PC-9 (cell line): ENCODE measurements at regions of chr1 and their contacts with region 1.

Region 1: DNA sequence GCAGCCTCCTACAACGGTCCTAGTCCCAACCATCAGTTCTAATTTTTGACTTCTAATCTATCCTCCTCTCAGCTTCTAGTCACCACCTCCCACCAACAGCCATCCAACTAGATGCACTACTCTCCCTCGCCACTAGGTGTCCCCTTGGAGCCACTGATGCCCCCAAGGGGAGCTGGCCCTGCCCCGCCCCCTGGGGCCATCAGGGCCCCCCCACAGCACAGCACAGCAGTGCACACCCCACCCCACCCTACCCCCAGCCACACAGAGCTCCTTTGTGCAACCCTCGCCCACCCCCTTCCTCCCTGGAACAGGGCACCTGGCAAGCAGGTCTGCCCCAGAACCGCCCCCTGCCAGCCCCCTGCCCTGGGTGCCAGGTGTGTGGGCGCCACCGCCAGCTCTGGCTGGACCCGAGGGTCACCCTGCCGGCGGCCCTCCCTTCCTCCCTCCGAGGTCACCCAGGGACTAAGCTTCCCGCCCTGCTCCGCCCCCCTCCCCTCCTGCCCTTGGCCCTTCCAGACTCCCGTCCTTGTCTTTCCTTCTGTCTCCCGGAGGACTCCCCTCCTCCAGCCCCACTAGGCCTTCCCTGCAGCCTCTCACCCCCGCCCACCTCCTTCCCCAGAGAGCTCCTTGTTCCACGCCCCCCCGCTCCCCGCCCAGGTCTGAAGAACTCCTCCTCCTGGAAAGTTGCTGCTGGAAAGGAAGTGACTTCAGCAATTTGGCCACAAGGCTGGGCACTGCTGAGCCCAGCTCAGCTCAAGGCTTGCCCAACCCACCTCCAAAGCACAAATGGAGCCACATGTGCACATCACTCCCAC is 47.0 kb downstream of the AHDC1 start:
- DNase-seq: peak; percentile 84 to 94
- H3K4me3 ChIP-seq: peak overlapping the region; percentile 29; the same call in 1 of the 2 replicates
- H3K27ac ChIP-seq: peak overlapping the region; percentile 88
- H3K4me1 ChIP-seq: peaks cover 22% of the 10 kb centered on the region
- H3K27me3 ChIP-seq: no peaks in the 10 kb centered on the region
- CTCF ChIP-seq: peak; percentile 91

Region 2: GRCh38 chr1:27388337-27389005 is 168.5 kb before region 1 on chr1:
- CTCF ChIA-PET with region 1: interaction called, 16 read pairs
- POLR2A ChIA-PET with region 1: no interaction called
- intact Hi-C with region 1: no loop called
- DNase-seq: peak; percentile 55 to 71
- H3K4me3 ChIP-seq: no peak overlapping the region
- H3K27ac ChIP-seq: no peak overlapping the region
- H3K4me1 ChIP-seq: no peaks in the 10 kb centered on the region
- H3K27me3 ChIP-seq: no peaks in the 10 kb centered on the region
- CTCF ChIP-seq: peak; percentile 87

Region 3: DNA sequence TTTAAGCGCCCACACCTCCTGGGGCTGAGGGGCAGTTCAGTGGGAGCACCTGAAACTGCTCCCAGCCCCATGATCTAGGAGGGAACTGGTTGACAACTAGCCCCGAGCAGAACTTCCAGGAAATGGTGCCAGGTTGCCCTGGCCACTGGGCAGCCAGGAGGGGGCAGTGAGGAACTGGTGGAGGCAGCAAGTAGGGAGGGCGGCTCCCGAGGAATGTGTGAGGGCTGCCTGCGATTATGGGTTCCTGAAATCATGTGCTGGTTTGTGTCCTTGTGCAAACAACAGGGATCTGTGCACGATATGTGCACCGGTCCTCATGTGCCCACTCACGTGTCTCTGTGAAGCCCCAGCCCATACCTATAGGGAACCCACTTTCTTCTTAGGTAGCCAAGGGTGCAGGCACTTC is 154.6 kb before region 1 on chr1:
- CTCF ChIA-PET with region 1: interaction called, 5 read pairs
- POLR2A ChIA-PET with region 1: interaction called, 20 read pairs
- intact Hi-C with region 1: loop called (anchors 5 kb)
- DNase-seq: peak in 1 of 2 experiments; percentile 48
- H3K4me3 ChIP-seq: no peak overlapping the region
- H3K27ac ChIP-seq: no peak overlapping the region
- H3K4me1 ChIP-seq: no peaks in the 10 kb centered on the region
- H3K27me3 ChIP-seq: no peaks in the 10 kb centered on the region
- CTCF ChIP-seq: no peak; the same call in 1 of the 2 replicates

Region 4: GRCh38 chr1:27542408-27543273 is 14.3 kb before region 1 on chr1:
- CTCF ChIA-PET with region 1: interaction called, 11 read pairs
- POLR2A ChIA-PET with region 1: interaction called, 11 read pairs
- intact Hi-C with region 1: loop called (anchors 1 kb)
- DNase-seq: peak; percentile 89 to 98
- H3K4me3 ChIP-seq: no peak overlapping the region; the same call in 1 of the 2 replicates
- H3K27ac ChIP-seq: peak overlapping the region; percentile 100
- H3K4me1 ChIP-seq: peaks cover 70% of the 10 kb centered on the region
- H3K27me3 ChIP-seq: no peaks in the 10 kb centered on the region
- CTCF ChIP-seq: no peak

Region 5: DNA sequence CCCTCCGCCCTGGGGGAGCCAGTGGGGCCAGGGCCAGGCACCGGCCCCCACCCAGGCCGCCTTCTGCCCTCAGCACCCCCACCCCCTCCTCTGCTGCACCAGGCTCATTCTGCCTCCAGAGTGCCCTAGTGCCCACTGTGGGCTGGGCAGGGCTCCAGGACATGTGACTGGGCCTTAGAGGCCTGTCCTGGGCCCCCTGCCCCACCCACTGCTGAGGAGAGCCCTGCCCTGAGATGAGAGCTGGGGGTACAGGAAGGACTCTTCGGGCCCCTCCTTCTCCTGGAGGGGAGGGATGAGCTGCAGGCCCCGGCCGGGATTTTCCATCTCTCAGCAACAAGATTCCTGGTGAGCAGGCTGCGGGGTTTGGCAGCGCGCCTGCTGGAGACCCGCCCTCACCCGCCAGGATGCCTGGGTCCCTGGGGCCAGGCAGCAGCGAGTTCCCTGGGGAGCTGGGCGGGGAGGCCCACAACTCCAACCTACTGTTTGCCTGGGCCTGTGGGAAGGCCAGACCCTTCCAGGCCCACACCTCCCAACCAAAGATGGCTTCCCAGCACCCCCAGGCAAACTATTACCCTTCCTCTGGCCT is 32.9 kb after region 1 on chr1:
- CTCF ChIA-PET with region 1: interaction called, 20 read pairs
- POLR2A ChIA-PET with region 1: interaction called, 19 read pairs
- intact Hi-C with region 1: loop called (anchors 1 kb)
- DNase-seq: peak in 1 of 2 experiments; percentile 80
- H3K4me3 ChIP-seq: no peak overlapping the region
- H3K27ac ChIP-seq: no peak overlapping the region
- H3K4me1 ChIP-seq: peaks cover 16% of the 10 kb centered on the region
- H3K27me3 ChIP-seq: no peaks in the 10 kb centered on the region
- CTCF ChIP-seq: no peak

Region 6: GRCh38 chr1:27662707-27663393 is 105.9 kb after region 1 on chr1:
- CTCF ChIA-PET with region 1: interaction called, 9 read pairs
- POLR2A ChIA-PET with region 1: interaction called, 3 read pairs
- intact Hi-C with region 1: loop called (anchors 1 kb)
- DNase-seq: peak; percentile 53 to 78
- H3K4me3 ChIP-seq: no peak overlapping the region
- H3K27ac ChIP-seq: no peak overlapping the region
- H3K4me1 ChIP-seq: peaks cover 9% of the 10 kb centered on the region; the same call in 1 of the 2 replicates
- H3K27me3 ChIP-seq: no peaks in the 10 kb centered on the region
- CTCF ChIP-seq: peak; percentile 84

Region 7: DNA sequence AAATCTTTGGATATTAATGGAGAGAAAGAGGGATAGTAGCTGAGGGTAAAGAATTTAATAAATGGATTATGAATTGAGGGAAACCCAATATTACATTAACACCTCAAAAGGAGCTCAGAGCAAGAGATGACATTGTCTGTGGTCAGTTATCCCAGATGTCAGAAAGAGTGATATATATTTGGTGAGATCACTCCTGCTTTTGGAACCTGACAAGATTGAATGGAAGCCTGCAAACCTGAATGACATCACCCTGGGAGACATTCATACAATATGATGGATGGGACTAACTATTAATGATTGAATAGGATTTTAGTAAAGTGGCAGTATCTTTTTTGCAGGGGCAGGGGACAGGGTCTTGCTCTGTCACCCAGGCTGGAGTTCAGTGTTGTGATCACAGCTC is 121.8 kb after region 1 on chr1:
- CTCF ChIA-PET with region 1: no interaction called
- POLR2A ChIA-PET with region 1: no interaction called
- intact Hi-C with region 1: no loop called
- DNase-seq: no peak
- H3K4me3 ChIP-seq: no peak overlapping the region
- H3K27ac ChIP-seq: no peak overlapping the region
- H3K4me1 ChIP-seq: 0 out of 2 replicates have a peak, but pooled peaks cover under 1% of the 10 kb centered on the region
- H3K27me3 ChIP-seq: no peaks in the 10 kb centered on the region
- CTCF ChIP-seq: no peak